ENCODE measurements at regions of chr1 and their contacts with region 1.

Region 1: DNA sequence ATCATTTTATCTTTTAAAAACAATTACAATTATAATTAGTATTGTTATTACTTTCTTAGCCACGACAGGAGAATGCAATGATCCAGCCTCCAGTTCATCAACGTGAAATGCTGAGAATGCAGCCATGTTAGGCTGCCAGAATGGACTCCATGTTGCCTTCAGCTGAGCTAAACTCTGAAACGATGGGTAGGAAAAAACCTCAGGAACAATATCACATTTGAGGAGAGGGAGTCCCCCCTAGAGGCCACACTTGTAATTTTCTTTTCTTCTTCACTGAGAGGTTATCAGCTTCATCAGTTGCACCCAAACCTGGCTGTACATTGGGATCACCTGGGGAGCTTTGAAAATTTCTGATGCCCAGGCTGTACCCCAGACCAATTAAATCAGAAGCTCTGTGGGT is 34.6 kb upstream of the DNAH14 start:
- DNase-seq: no peak
- H3K4me3 ChIP-seq: no peak overlapping the region
- CTCF ChIP-seq: peak; percentile 33

Region 2: DNA sequence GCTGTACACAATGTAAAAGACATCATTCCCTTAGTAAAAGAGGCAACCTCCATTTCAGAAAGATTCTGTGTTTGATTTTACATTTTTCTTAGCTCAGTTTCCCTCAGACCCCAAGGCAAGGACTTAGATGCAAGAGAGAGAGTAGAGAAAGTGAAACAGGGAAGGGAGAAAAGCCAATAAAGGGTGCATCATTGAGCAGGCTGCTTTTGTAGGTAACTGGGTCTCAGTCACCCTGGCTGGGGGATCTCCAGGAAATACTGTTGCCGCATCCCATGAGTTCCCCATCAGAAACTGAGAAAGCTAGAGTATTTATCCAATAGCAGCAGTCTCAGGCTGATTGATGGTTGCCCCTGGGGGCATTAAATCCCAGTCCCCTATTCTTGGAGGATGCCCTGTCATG is 11.4 kb after region 1 on chr1:
- CTCF ChIA-PET with region 1: interaction called, 13 read pairs
- POLR2A ChIA-PET with region 1: no interaction called
- DNase-seq: no peak
- H3K4me3 ChIP-seq: no peak overlapping the region
- CTCF ChIP-seq: no peak

Region 3: GRCh38 chr1:224922404-224923164 is 27.7 kb after region 1 on chr1:
- CTCF ChIA-PET with region 1: interaction called, 24 read pairs
- POLR2A ChIA-PET with region 1: no interaction called
- DNase-seq: no peak
- H3K4me3 ChIP-seq: no peak overlapping the region
- CTCF ChIP-seq: peak; percentile 56

Measured in AG04449 (cell line).